Caco-2 (cell line): ENCODE measurements at regions of chr14 and their contacts with region 1.

Region 1: DNA sequence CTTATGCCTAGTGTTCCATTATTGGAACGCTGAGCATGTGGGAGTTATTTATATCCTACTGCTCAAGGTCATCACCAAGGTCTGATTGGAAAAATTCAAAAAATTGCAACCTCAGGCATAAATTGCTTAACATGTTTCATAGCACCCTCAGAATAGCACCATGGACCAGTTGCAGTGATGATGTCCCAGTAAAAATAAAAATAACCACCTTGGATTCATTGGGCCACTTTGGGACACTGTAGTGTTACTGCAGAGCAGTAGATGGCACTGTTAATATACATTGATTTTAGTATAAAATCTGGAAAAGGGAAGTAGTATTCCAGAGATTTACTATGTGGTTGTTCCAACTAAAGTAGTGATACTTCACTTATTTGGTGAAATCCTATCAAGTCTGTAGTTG is 31.0 kb upstream of the PTCSC3 start:
- DNase-seq: peak in 1 of 2 experiments; percentile 12
- H3K4me3 ChIP-seq: no peak overlapping the region
- H3K4me3 Mint-ChIP-seq: no peak overlapping the region
- H3K27ac Mint-ChIP-seq: no peak overlapping the region
- H3K4me1 ChIP-seq: peaks cover 30% of the 10 kb centered on the region
- H3K4me1 Mint-ChIP-seq: peaks cover 28% of the 10 kb centered on the region
- H3K27me3 ChIP-seq: no peaks in the 10 kb centered on the region
- H3K27me3 Mint-ChIP-seq: peaks cover 5% of the 10 kb centered on the region
- CTCF ChIP-seq: peak; percentile 38 to 43

Region 2: GRCh38 chr14:36105401-36105800 is 102.1 kb before region 1 on chr14:
- CTCF ChIA-PET with region 1: no interaction called
- POLR2A ChIA-PET with region 1: no interaction called
- intact Hi-C with region 1: loop called (anchors 2 kb)
- DNase-seq: peak; percentile 41 to 51
- H3K4me3 ChIP-seq: no peak overlapping the region
- H3K4me3 Mint-ChIP-seq: no peak overlapping the region
- H3K27ac Mint-ChIP-seq: no peak overlapping the region
- H3K4me1 ChIP-seq: no peaks in the 10 kb centered on the region
- H3K4me1 Mint-ChIP-seq: no peaks in the 10 kb centered on the region
- H3K27me3 ChIP-seq: no peaks in the 10 kb centered on the region
- H3K27me3 Mint-ChIP-seq: peaks cover 14% of the 10 kb centered on the region
- CTCF ChIP-seq: peak; percentile 20 to 32

Region 3: DNA sequence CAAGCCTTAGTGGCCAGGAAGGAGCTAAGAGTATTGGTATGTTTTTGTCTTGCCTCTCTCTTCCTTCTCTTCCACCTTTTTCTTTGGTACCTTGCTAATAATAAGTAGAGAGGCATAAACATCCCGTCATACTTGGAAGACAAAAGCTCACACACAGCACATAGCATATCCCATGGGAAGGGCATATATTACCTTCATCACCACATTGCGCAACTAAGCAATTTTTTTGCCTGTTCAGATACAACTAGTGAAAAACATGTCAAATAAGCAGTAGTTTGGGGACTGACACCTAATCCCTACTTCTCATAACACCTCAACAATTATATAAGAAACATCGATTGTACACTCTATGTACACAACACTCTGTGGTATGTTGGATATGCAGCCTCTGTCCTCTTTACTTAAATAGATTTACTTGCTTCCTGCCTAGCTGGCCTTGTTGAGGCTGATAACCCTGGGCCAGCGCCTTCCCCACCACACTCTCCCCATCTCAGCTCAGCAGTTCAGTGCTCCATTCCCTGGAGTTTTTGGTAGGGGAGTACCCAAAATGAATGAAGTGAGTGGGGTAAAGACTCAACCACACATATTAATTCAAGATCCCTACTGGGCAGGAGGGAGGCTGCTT is 77.6 kb after region 1 on chr14:
- CTCF ChIA-PET with region 1: no interaction called
- POLR2A ChIA-PET with region 1: no interaction called
- intact Hi-C with region 1: loop called (anchors 2 kb)
- DNase-seq: no peak
- H3K4me3 ChIP-seq: no peak overlapping the region
- H3K4me3 Mint-ChIP-seq: no peak overlapping the region
- H3K27ac Mint-ChIP-seq: no peak overlapping the region
- H3K4me1 ChIP-seq: peaks cover 24% of the 10 kb centered on the region
- H3K4me1 Mint-ChIP-seq: peaks cover 42% of the 10 kb centered on the region
- H3K27me3 ChIP-seq: no peaks in the 10 kb centered on the region
- H3K27me3 Mint-ChIP-seq: no peaks in the 10 kb centered on the region
- CTCF ChIP-seq: no peak

Region 4: DNA sequence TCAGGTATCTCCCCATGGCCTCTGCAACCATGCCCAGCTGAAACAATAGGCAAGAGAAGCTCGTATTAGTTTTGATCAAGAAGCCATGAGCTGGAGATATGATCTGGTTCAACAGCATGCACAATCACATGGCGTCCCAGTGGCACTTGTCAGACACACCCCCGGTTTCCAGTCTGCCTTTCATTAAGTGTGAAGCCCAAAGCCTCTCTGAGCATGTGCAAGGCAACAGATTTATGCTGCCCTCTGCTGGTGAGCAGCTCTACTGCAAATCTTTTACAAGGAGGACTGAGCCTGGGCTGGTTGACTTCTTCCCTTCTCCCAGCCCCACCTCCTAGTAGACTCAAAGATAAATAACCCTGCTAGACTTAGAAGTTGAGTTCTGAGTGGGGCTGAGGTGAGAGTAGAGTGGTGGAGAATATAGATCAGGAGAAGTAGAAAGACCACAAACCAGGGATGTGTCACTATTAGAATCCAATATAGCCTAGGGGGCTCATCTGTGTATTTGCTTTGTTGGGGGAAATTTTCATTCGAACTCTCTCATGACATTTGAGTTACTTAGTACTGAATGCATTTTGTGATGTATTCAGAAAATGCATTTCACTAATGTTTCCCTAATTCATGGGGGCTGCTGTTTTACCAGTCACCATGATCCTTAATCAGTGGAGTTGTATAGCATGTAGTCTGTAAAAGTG is 166.6 kb after region 1 on chr14:
- CTCF ChIA-PET with region 1: no interaction called
- POLR2A ChIA-PET with region 1: no interaction called
- intact Hi-C with region 1: loop called (anchors 1 kb)
- DNase-seq: peak; percentile 84 to 86
- H3K4me3 ChIP-seq: no peak overlapping the region
- H3K4me3 Mint-ChIP-seq: no peak overlapping the region
- H3K27ac Mint-ChIP-seq: no peak overlapping the region
- H3K4me1 ChIP-seq: no peaks in the 10 kb centered on the region
- H3K4me1 Mint-ChIP-seq: peaks cover 6% of the 10 kb centered on the region
- H3K27me3 ChIP-seq: no peaks in the 10 kb centered on the region
- H3K27me3 Mint-ChIP-seq: peaks cover 3% of the 10 kb centered on the region
- CTCF ChIP-seq: peak; percentile 85 to 90

Region 5: DNA sequence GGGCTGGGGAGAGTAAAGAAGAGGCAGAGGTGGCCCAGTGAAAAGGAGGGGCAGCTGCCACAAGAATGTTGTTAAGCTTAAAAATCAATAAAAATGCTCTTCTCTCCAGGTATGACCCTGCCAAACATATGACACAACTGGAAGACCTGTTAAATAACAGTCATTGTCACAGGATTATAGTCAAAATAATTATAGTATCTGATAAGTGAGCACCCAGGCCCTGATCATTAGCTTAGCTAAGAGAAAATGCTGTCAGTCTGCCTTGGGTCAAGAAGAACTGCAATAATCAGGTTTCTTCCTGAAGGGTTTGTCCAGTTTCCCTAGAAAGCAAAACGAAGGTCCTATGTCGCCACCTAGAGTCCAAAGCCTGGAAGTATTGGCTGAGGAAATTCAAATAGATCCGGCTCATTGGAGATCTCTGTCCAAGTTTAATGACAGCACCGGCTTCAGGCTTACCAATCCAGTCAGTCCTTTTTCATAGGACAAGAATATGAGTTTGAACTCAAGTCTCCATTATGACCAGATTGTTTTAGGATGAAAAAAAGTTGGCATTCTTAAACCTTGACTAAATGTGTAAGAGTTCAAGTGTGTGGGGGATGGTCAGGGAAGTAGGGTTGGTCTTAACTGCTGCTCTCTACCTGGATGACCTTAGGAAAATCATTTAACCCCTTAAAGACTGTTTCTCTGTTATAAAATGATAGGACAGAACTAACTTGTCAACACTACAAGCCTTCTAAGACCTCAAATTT is 397.4 kb after region 1 on chr14:
- CTCF ChIA-PET with region 1: no interaction called
- POLR2A ChIA-PET with region 1: no interaction called
- intact Hi-C with region 1: loop called (anchors 5 kb)
- DNase-seq: peak; percentile 69 to 80
- H3K4me3 ChIP-seq: no peak overlapping the region
- H3K4me3 Mint-ChIP-seq: no peak overlapping the region
- H3K27ac Mint-ChIP-seq: no peak overlapping the region
- H3K4me1 ChIP-seq: no peaks in the 10 kb centered on the region
- H3K4me1 Mint-ChIP-seq: peaks cover 8% of the 10 kb centered on the region
- H3K27me3 ChIP-seq: no peaks in the 10 kb centered on the region
- H3K27me3 Mint-ChIP-seq: no peaks in the 10 kb centered on the region
- CTCF ChIP-seq: peak; percentile 71 to 84